Heart left ventricle (tissue), 16 donors: ENCODE measurements at regions of chrX and their contacts with region 1.

Region 1: GRCh38 chrX:97685753-97686152 is 802.0 kb downstream of the RPA4 start:
- DNase-seq: no peak
- ATAC-seq: no peak
- H3K4me3 ChIP-seq: no peak overlapping the region
- H3K27ac ChIP-seq: no peak overlapping the region
- H3K4me1 ChIP-seq: no peaks in the 10 kb centered on the region
- H3K27me3 ChIP-seq: no peaks in the 10 kb centered on the region
- CTCF ChIP-seq: peak in 11 of 12 donors; percentile 19 to 52 (median 35)
- POLR2A ChIP-seq: no peak

Region 2: GRCh38 chrX:96764864-96765263 is 920.9 kb before region 1 on chrX:
- intact Hi-C with region 1: loop called in 2 of 10 experiments (anchors 10 kb)
- DNase-seq: no peak
- ATAC-seq: no peak
- H3K4me3 ChIP-seq: no peak overlapping the region
- H3K27ac ChIP-seq: no peak overlapping the region
- H3K4me1 ChIP-seq: peaks cover 0 to 4% (median 0%) of the 10 kb centered on the region in 12 donors
- H3K27me3 ChIP-seq: peaks cover 0 to 11% (median 0%) of the 10 kb centered on the region in 9 donors
- CTCF ChIP-seq: no peak
- POLR2A ChIP-seq: no peak

Region 3: GRCh38 chrX:97797076-97797475 is 111.3 kb after region 1 on chrX:
- intact Hi-C with region 1: no loop called
- DNase-seq: no peak
- ATAC-seq: no peak
- H3K4me3 ChIP-seq: no peak overlapping the region
- H3K27ac ChIP-seq: no peak overlapping the region
- H3K4me1 ChIP-seq: no peaks in the 10 kb centered on the region
- H3K27me3 ChIP-seq: peaks cover 0 to 9% (median 0%) of the 10 kb centered on the region in 9 donors
- CTCF ChIP-seq: no peak
- POLR2A ChIP-seq: no peak